Activated T-helper 1 cell treated with anti-CD3 and anti-CD28 coated beads, Interleukin-12 subunit alpha, Interleukin-12 subunit beta, Interleukin-2, Interleukin-4 antibody, amounts not matched to agents 30 ng/mL and 10 ng/mL and 1 ng/mL, durations not matched to agents 14 hours and 24 hours and 36 hours (primary cell): ENCODE measurements at regions of chr1 and their contacts with region 1.

Region 1: GRCh38 chr1:203702130-203702577 is 62.8 kb upstream of the LAX1 start:
- DNase-seq: peak; percentile 25
- H3K4me3 Mint-ChIP-seq: no peak overlapping the region
- H3K27ac Mint-ChIP-seq: peak overlapping the region; percentile 79
- H3K4me1 Mint-ChIP-seq: peaks cover 19% of the 10 kb centered on the region
- H3K27me3 Mint-ChIP-seq: no peaks in the 10 kb centered on the region

Region 2: DNA sequence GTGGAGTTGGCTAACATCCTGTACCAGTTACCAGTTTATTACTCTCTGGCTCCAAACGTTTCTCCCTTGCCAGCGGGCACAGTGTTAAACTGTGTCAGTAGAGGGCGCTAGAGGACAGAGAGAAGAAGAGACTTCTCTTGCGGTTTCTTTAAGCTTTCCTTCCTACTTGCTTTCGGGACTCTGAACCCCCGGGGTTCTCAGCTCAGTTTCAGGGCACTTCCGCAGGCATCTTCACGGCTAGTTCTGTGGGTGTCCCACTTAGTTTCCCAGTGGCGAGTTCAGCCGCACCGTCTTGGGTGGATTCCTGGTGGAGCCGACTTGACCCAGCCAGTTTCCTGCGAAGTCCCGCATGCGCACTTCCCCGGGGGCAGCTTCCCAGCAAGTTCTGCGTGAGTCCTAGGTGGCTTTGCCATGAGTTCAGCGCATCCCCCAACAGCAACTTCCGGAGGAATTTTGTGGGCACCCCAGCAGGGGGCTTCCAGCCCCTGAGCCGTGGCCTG is 434.8 kb before region 1 on chr1:
- intact Hi-C with region 1: loop called (anchors 5 kb)
- DNase-seq: peak; percentile 78
- H3K4me3 Mint-ChIP-seq: peak overlapping the region; percentile 79
- H3K27ac Mint-ChIP-seq: peak overlapping the region; percentile 19
- H3K4me1 Mint-ChIP-seq: peaks cover 15% of the 10 kb centered on the region
- H3K27me3 Mint-ChIP-seq: peaks cover 6% of the 10 kb centered on the region

Region 3: GRCh38 chr1:203340112-203340804 is 361.9 kb before region 1 on chr1:
- intact Hi-C with region 1: loop called (anchors 2 kb)
- DNase-seq: peak; percentile 45
- H3K4me3 Mint-ChIP-seq: no peak overlapping the region
- H3K27ac Mint-ChIP-seq: no peak overlapping the region
- H3K4me1 Mint-ChIP-seq: peaks cover 35% of the 10 kb centered on the region
- H3K27me3 Mint-ChIP-seq: peaks cover 30% of the 10 kb centered on the region

Region 4: GRCh38 chr1:203504397-203505250 is 197.5 kb before region 1 on chr1:
- intact Hi-C with region 1: loop called (anchors 1 kb)
- DNase-seq: peak; percentile 59
- H3K4me3 Mint-ChIP-seq: no peak overlapping the region
- H3K27ac Mint-ChIP-seq: no peak overlapping the region
- H3K4me1 Mint-ChIP-seq: peaks cover 8% of the 10 kb centered on the region
- H3K27me3 Mint-ChIP-seq: peaks cover 9% of the 10 kb centered on the region

Region 5: DNA sequence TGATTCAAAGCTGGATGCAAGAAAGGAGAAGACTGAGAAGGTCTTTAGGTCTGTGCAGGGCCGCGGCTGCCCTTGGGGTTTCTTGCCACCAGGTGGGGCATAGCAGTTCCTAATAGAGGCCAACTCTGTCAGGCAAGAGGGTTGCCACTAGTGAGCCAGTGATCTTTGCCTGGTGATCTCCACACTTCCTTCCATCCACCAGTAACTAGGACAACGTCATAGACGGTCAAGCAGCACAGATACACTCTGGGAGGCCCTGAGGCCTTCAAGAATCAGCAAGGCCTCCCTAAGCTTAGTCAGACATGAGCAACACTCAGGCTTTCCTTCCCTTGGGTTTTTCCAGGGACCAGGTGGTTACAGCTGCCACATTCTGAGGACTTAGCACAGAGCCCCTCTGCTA is 108.4 kb before region 1 on chr1:
- intact Hi-C with region 1: loop called (anchors 1 kb)
- DNase-seq: peak; percentile 47
- H3K4me3 Mint-ChIP-seq: no peak overlapping the region
- H3K27ac Mint-ChIP-seq: peak overlapping the region; percentile 26
- H3K4me1 Mint-ChIP-seq: peaks cover 29% of the 10 kb centered on the region
- H3K27me3 Mint-ChIP-seq: no peaks in the 10 kb centered on the region

Region 6: GRCh38 chr1:203612932-203613682 is 89.0 kb before region 1 on chr1:
- intact Hi-C with region 1: loop called (anchors 1 kb)
- DNase-seq: no peak
- H3K4me3 Mint-ChIP-seq: no peak overlapping the region
- H3K27ac Mint-ChIP-seq: peak overlapping the region; percentile 74
- H3K4me1 Mint-ChIP-seq: peaks cover 57% of the 10 kb centered on the region
- H3K27me3 Mint-ChIP-seq: no peaks in the 10 kb centered on the region

Region 7: DNA sequence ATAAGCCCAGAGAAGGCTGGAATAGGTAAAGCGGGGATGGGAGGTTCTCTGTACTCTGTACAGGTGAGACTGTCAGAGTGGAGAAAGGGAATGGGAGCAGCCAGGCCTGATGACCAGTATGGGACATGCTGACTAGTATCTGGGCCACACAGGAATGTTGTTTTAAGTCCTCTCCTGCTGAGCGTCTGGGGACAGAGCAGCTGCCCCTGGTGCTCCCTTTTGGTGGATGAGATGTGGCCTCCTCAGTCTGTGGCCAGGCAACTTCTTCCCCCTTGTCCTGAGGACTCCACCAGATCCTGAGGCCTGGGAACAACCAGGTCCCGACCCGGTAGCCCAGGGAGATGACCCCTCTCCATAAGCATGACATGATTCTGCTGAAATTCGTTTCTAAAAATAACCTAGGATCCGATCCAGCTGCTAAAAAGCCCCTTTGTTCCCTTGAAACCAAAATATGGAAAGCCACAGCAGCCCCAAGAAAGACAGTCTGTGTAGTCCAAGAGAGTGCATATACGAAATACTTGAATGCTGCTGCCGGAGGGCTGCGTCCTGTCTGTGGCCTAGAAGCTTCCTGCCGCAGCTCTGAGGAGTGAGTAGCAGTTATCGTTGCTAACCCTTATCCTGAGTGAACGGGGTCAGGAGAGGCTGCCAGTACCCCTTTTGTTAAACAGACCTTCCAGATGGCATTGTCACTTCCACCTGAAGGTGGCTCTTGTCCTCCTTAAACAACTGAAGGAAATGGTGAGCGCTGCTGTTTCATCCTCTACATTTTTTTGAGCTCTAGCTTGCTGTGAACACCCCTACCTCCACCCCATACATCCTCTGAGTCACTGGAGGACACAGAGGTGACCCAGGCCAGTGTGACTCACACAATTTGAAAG is 28.4 kb before region 1 on chr1:
- intact Hi-C with region 1: loop called (anchors 1 kb)
- DNase-seq: peak; percentile 71
- H3K4me3 Mint-ChIP-seq: peak overlapping the region; percentile 70
- H3K27ac Mint-ChIP-seq: peak overlapping the region; percentile 92
- H3K4me1 Mint-ChIP-seq: peaks cover 56% of the 10 kb centered on the region
- H3K27me3 Mint-ChIP-seq: no peaks in the 10 kb centered on the region